Left ventricle myocardium superior (tissue), 1 donor: ENCODE measurements at regions of chr12 and their contacts with region 1.

Region 1: GRCh38 chr12:50111693-50112455 is at the start of gene COX14:
- DNase-seq: peak; percentile 99
- ATAC-seq: peak; percentile 87
- total RNA-seq, gene COX14: 237 TPM

Region 2: GRCh38 chr12:49809381-49809905 is 302.4 kb before region 1 on chr12:
- intact Hi-C with region 1: no loop called
- DNase-seq: peak; percentile 76
- ATAC-seq: peak; percentile 79

Region 3: DNA sequence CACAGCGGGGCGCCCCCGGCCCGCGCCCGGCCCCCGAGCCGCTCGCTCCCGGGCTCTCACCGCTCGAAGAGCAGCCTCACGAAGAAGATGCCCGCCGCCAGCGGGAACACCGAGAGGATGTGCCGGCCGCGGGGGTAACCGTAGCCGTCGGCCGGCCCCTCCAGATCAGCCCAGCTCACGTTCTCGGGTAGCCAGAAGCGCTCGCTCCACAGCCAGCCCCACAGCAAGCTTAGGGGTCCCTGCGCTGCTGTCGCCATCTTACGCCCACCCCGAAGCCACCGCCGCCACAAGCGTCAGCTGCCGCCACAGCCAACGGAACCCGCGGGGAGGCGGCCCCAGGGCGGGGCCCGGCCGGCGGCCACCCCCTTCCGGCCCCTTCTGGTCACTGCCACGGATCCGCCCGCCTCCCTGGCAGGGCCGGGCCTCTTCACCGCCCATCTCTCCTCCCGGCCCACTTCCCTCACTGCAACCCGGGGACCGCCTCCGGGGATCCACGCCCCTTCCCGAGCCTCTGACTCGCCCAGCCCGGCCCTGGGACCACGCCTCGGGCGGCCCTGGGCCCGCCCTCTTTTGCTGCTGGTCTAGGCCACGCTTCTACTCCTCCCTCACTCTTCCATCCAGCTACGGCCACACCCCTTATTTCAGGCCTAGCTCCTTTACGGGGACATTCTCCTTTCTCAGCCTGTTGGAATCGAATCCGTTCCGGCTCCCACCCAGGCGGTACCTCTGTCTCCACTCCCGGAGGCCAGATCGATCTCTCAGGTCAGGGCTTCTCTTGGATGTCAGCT is 55.4 kb after region 1 on chr12 and contains the start of gene CERS5:
- intact Hi-C with region 1: loop called (anchors 10 kb)
- DNase-seq: peak; percentile 99
- ATAC-seq: peak; percentile 99
- total RNA-seq, gene CERS5: 9.4 TPM

Region 4: DNA sequence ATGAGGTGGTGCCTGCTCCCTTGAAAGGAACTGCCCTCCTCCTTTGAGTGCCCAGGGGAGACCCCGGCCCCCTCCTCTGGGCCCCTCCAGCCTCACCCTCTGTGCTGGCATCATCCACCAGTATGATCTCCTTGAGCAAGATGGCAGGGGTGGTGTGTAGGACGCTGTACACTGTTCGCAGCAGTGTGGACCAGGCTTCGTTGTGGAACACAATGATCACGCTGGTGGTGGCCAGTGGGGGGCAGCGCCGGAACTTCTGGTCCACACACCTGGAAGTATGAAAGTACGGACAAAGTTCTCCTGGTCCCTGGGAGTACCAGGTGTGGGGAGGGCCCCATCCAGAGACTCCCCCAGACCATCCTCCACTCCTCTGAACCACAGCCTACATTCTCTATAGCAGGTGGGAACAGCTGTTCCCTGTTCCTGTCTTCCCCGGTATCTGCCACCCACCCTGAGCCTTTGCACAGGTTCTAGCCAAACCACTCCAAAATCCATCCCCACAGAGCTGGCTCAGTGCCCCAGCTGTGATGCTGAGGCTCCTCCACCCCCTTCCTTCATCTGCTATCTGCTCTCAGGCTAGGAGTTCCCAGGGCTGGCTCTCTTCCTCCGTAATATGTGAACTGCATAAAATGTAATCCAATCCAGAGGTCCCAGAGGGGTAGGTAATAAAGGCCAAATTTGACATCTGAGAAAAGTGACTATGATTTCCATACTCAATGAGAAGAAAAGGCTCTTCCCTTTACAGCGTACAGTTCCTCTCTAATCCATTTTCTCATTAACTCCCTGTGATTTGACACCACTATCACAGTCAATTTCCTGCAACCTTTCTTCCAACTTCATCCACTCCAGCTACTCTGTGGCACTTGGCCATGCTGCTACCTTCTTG is 1265.5 kb after region 1 on chr12:
- intact Hi-C with region 1: no loop called
- DNase-seq: no peak
- ATAC-seq: no peak